ENCODE measurements at regions of chr1 and their contacts with region 1.

Region 1: DNA sequence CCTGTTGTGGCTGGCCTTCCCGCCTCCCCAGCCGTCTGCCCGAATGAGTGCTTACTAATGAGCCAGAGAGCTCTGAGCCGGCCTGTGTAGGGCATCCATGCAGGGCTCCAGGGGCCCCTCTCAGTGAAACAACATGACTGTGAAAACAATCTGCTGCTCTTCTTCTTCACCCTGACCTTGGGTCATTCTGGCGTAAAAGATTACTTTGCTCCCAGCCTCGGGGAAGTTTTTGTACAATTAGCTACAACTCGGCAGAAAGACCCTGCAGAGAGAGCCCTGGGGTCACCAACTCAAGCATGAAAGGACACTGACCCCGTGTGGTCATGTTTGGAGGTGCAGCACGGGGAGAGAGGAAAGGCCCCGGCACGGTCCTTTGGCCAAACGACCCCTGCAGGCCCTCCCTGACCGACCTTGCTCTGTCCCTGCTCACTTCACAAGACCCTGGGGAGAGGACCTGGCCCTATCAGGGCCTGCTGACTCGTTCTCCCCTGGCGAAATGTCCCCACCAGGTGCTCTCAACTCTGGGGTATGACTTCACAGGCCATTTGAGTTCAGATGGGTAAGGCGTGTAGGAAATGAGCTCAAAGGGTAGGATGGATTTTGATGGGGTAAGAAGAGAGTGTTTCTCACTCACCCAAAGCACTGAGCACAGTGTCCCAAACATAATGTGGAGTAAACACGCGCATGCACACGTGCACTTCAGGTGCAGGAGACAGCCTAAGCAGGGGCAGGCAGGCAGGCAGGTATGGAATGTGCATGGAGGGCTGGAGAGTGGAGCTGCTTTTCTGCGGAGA is 22.9 kb upstream of the FAM20B start:
- DNase-seq: peak; percentile 77
- H3K4me3 Mint-ChIP-seq: no peak overlapping the region
- H3K27ac Mint-ChIP-seq: peak overlapping the region; percentile 33
- H3K4me1 Mint-ChIP-seq: peaks cover 13% of the 10 kb centered on the region
- H3K27me3 Mint-ChIP-seq: no peaks in the 10 kb centered on the region

Region 2: GRCh38 chr1:178532392-178532791 is 470.4 kb before region 1 on chr1:
- CTCF ChIA-PET with region 1: interaction called, 38 read pairs
- intact Hi-C with region 1: loop called (anchors 1 kb)
- DNase-seq: peak; percentile 84
- H3K4me3 Mint-ChIP-seq: no peak overlapping the region
- H3K27ac Mint-ChIP-seq: no peak overlapping the region
- H3K4me1 Mint-ChIP-seq: no peaks in the 10 kb centered on the region
- H3K27me3 Mint-ChIP-seq: no peaks in the 10 kb centered on the region

Region 3: DNA sequence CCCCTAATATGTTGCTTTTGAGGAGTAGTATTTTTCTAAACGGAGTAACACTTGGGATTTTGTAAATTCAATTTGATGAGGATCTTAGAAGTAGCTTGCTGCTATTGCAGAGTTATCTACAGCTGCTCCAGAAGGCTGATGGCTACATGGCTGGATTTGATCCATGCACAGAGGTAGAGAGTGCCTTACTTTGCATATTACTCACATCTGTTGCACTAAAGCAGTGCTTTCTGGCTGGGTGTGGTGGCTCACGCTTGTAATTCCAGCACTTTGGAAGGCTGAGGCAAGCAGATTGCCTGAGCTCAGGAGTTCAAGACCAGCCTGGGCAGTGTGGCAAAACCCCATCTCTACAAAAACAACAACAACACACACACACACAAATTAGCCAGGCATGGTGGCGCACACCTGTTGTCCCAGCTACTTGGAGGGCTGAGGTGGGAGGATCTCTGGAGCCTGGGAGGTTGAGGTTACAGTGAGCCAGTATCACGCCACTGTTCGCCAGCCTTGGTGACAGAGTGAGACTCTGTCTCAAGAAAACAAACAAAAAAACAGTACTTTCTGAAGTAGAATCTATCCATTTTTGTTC is 253.1 kb before region 1 on chr1:
- CTCF ChIA-PET with region 1: interaction called, 14 read pairs
- intact Hi-C with region 1: no loop called
- DNase-seq: no peak
- H3K4me3 Mint-ChIP-seq: no peak overlapping the region
- H3K27ac Mint-ChIP-seq: no peak overlapping the region
- H3K4me1 Mint-ChIP-seq: no peaks in the 10 kb centered on the region
- H3K27me3 Mint-ChIP-seq: no peaks in the 10 kb centered on the region

Region 4: GRCh38 chr1:178774263-178774662 is 228.5 kb before region 1 on chr1:
- CTCF ChIA-PET with region 1: interaction called, 71 read pairs
- intact Hi-C with region 1: loop called (anchors 1 kb)
- DNase-seq: no peak
- H3K4me3 Mint-ChIP-seq: no peak overlapping the region
- H3K27ac Mint-ChIP-seq: no peak overlapping the region
- H3K4me1 Mint-ChIP-seq: no peaks in the 10 kb centered on the region
- H3K27me3 Mint-ChIP-seq: no peaks in the 10 kb centered on the region

Region 5: DNA sequence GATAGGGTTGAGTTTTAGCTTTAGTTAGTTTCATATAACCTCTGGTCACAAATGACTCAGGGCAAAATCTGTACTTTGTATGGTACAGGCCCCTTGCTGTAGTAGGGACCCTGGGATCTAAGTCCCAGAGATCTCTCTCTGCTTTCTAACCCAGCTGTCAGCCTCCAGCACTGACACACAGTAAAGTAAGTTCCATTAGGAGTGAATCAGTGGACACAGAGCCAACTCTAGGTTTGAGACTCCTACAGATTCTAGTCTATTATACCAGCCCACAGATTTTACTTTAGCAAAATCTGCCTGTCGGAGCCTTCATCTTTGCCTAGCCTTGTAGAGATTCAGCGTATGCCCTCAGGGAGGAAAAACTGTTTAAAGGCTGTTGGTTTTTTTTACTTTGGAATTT is 184.3 kb before region 1 on chr1:
- CTCF ChIA-PET with region 1: interaction called, 17 read pairs
- intact Hi-C with region 1: no loop called
- DNase-seq: no peak
- H3K4me3 Mint-ChIP-seq: no peak overlapping the region
- H3K27ac Mint-ChIP-seq: no peak overlapping the region
- H3K4me1 Mint-ChIP-seq: peaks cover 8% of the 10 kb centered on the region
- H3K27me3 Mint-ChIP-seq: no peaks in the 10 kb centered on the region

Region 6: GRCh38 chr1:179038528-179039283 is 36.0 kb after region 1 on chr1:
- CTCF ChIA-PET with region 1: no interaction called
- intact Hi-C with region 1: no loop called
- DNase-seq: peak; percentile 23
- H3K4me3 Mint-ChIP-seq: no peak overlapping the region
- H3K27ac Mint-ChIP-seq: peak overlapping the region; percentile 28
- H3K4me1 Mint-ChIP-seq: peaks cover 59% of the 10 kb centered on the region
- H3K27me3 Mint-ChIP-seq: no peaks in the 10 kb centered on the region

Measured in activated naive CD4-positive, alpha-beta T cell treated with anti-CD3 and anti-CD28 coated beads for 36 hours (primary cell).